ENCODE measurements at regions of chr10 and their contacts with region 1.

Region 1: DNA sequence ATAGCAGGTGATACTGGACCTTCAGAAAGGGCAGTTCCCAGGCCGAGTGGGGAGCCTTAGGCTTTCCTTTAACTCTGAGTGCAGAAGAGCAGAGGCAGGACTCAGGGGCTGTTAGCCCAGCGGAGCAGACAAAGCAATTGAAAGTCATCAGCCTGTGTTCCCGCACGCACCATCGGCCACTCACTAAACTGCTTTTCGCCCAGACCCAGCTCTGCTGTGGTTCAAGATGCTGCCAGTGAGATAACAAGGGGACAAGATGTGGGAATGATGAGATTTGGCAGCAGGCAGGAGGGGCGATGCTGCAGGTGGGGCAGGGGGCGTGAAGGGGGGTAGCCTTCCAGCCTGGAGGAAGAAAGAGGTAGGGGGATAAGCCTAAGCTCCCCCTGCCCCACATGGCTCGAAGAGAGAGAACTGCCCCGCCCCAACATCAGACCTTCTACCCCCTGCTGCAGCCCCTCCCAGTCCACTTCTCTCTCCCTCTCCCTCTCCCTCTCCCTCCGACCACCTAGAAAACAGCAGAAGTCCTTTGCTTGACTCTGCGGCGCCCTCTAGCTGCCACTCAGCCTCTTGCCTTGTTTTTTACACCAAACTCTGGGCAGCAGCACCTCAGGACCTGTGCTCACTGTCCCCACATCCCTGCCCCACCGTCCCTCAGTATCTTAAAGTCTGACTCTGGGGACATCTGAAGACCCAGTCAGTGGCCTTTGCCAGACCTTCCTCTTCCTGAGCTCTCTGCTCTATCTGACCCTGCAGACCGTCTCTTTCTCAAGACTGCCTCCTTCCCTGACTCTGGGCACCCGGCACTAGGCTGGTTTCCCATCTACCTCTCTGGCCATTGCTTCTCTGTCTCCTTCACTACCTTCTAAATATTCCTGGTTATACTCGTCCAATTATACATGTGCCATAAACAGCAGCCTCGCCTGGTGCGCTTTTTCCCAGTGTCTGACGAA is 110.5 kb downstream of the C10orf105 start:
- DNase-seq: peak; percentile 20
- H3K4me3 ChIP-seq: no peak overlapping the region
- H3K27ac ChIP-seq: no peak overlapping the region
- H3K4me1 ChIP-seq: no peaks in the 10 kb centered on the region
- H3K27me3 ChIP-seq: no peaks in the 10 kb centered on the region
- CTCF ChIP-seq: peak; percentile 86 to 87

Region 2: GRCh38 chr10:70925377-70926225 is 683.5 kb before region 1 on chr10:
- CTCF ChIA-PET with region 1: no interaction called
- dilution Hi-C with region 1: no loop called
- in situ Hi-C with region 1: no loop called
- intact Hi-C with region 1: no loop called
- DNase-seq: no peak
- H3K4me3 ChIP-seq: no peak overlapping the region
- H3K27ac ChIP-seq: no peak overlapping the region
- H3K4me1 ChIP-seq: peaks cover 6% of the 10 kb centered on the region
- H3K27me3 ChIP-seq: peaks cover 2% of the 10 kb centered on the region
- CTCF ChIP-seq: peak; percentile 79 to 96

Region 3: GRCh38 chr10:71383972-71384687 is 225.0 kb before region 1 on chr10:
- CTCF ChIA-PET with region 1: no interaction called
- dilution Hi-C with region 1: no loop called
- in situ Hi-C with region 1: no loop called
- intact Hi-C with region 1: loop called (anchors 1 kb)
- DNase-seq: no peak
- H3K4me3 ChIP-seq: no peak overlapping the region
- H3K27ac ChIP-seq: no peak overlapping the region
- H3K4me1 ChIP-seq: no peaks in the 10 kb centered on the region
- H3K27me3 ChIP-seq: no peaks in the 10 kb centered on the region
- CTCF ChIP-seq: peak; percentile 93 to 94

Region 4: DNA sequence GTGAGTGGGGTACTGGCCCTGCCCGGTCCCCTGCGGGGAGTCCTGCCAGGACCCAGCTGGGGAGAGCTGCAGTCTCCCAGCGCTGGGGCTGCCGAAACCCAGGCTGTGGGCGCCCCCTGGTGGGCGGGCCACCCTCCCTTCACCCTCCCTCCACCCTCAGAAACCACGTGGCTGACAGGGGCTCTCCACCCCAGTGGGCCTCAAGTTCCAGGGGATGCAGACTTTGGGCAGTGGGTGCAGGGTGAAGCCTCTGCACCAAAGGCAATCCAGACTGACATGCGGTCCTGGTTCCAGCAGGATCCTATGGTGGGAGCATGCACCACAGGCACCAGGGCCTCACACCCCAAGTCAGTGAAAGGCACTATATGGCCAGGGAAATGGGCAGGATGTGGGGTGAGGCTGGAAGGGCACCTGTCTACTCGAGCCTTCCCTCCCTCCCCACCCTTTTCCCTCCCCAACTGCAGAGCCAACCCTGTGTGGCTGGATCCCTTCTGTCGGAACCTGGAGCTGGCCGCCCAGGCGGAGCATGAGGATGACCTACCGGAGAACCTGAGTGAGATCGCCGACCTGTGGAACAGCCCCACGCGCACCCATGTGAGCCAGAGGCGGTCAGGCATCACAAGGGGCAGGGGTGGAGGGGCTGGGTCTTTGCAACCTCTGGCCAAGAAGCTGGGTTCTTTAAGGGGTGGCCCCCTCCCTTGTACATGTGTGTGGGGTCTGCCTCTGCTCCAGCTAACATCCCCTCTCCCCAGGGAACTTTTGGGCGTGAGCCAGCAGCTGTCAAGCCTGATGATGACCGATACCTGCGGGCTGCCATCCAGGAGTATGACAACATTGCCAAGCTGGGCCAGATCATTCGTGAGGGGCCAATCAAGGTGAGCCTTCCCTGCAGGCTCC is 203.2 kb after region 1 on chr10:
- CTCF ChIA-PET with region 1: no interaction called
- dilution Hi-C with region 1: no loop called
- in situ Hi-C with region 1: no loop called
- intact Hi-C with region 1: loop called (anchors 5 kb)
- DNase-seq: peak; percentile 29
- H3K4me3 ChIP-seq: no peak overlapping the region
- H3K27ac ChIP-seq: no peak overlapping the region
- H3K4me1 ChIP-seq: no peaks in the 10 kb centered on the region
- H3K27me3 ChIP-seq: no peaks in the 10 kb centered on the region
- CTCF ChIP-seq: peak; percentile 64 to 88

Region 5: GRCh38 chr10:71985542-71986250 is 376.6 kb after region 1 on chr10:
- CTCF ChIA-PET with region 1: interaction called, 20 read pairs
- dilution Hi-C with region 1: no loop called
- in situ Hi-C with region 1: no loop called
- intact Hi-C with region 1: no loop called
- DNase-seq: no peak
- H3K4me3 ChIP-seq: no peak overlapping the region
- H3K27ac ChIP-seq: no peak overlapping the region
- H3K4me1 ChIP-seq: peaks cover 33% of the 10 kb centered on the region
- H3K27me3 ChIP-seq: no peaks in the 10 kb centered on the region
- CTCF ChIP-seq: no peak